MCF 10A (cell line): ENCODE measurements at regions of chr17 and their contacts with region 1.

Region 1: DNA sequence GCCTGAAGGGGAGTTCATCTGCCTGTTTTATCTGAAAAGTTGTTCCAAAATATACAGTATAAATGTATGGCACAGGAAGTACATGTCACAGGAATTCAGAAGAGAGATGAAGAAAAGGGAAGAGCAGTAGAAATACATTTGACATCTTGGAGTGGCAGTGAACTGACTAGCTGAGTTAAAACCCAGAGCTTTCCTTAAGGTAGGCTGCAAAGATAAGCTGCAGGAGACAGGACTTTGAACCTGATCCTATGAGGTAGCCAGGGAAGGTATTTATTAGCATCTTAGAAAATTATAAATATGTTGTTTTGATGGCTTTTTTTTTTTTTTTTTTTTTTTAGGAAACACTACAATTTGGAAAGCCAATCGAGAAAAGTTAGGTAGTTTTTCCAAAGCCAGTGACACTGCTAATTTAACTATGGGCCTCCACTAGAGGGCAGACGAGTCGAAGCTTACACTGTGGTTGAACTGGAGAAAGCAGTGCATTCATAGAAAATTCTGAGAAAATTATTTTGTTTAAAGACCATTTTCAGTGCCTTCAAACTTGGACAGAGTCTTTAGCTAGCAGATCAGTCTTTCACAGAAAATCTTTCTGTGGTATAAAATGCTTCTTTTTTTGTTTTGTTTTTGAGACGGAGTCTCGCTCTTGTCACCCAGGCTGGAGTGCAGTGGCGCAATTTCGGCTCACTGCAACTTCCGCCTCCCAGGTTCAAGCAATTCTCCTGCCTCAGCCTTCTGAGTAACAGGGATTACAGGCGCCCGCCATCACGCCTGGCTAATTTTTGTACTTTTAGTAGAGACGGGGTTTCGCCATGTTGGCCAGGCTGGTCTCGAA is 122.3 kb downstream of the SSH2 start:
- DNase-seq: peak; percentile 74
- H3K4me3 Mint-ChIP-seq: no peak overlapping the region
- H3K27ac Mint-ChIP-seq: no peak overlapping the region
- H3K4me1 Mint-ChIP-seq: no peaks in the 10 kb centered on the region
- H3K27me3 Mint-ChIP-seq: no peaks in the 10 kb centered on the region
- CTCF ChIP-seq: peak; percentile 74

Region 2: GRCh38 chr17:29825604-29826003 is 17.9 kb after region 1 on chr17:
- CTCF ChIA-PET with region 1: interaction called, 12 read pairs
- POLR2A ChIA-PET with region 1: interaction called, 4 read pairs
- intact Hi-C with region 1: no loop called
- DNase-seq: no peak
- H3K4me3 Mint-ChIP-seq: no peak overlapping the region
- H3K27ac Mint-ChIP-seq: no peak overlapping the region
- H3K4me1 Mint-ChIP-seq: no peaks in the 10 kb centered on the region
- H3K27me3 Mint-ChIP-seq: no peaks in the 10 kb centered on the region
- CTCF ChIP-seq: no peak

Region 3: DNA sequence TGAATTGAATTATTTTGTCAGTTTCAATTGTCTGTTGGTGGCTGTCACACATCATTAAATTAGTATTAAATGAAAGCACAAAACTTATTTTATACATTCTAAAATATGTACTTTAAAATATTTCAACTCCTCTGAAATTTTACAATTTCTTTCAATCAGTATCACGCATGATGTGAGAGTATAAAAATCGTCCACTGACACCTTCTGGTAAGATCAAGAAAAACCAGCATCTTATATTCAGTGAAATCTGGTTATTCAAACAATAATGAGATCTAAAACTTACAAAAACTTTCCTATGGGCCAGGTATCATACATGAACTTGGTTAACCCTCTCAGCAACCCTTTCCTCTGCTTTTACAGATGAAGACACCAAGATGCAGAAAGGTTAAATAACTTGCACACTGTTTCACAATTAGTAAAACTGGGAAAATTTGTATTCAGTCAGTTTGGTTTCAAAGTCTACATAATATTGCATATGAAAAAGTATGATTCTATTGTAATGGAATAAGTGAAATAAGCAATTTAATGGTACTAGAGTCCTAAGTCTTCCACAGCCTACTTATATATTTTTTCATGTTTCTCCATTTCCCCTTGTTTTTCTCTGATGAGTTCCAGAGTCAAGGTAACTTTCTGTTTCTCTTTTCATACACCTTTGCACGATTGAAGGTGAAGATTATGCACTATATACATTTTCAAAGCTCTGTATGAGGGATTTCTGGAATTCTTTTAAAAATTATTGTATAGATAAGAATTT is 192.4 kb after region 1 on chr17:
- CTCF ChIA-PET with region 1: interaction called, 7 read pairs
- POLR2A ChIA-PET with region 1: interaction called, 3 read pairs
- intact Hi-C with region 1: loop called (anchors 2 kb)
- DNase-seq: peak; percentile 18
- H3K4me3 Mint-ChIP-seq: no peak overlapping the region
- H3K27ac Mint-ChIP-seq: no peak overlapping the region
- H3K4me1 Mint-ChIP-seq: peaks cover 7% of the 10 kb centered on the region
- H3K27me3 Mint-ChIP-seq: no peaks in the 10 kb centered on the region
- CTCF ChIP-seq: no peak

Region 4: GRCh38 chr17:30021708-30022317 is 214.1 kb after region 1 on chr17:
- CTCF ChIA-PET with region 1: interaction called, 17 read pairs
- POLR2A ChIA-PET with region 1: interaction called, 3 read pairs
- intact Hi-C with region 1: loop called (anchors 1 kb)
- DNase-seq: peak; percentile 66
- H3K4me3 Mint-ChIP-seq: no peak overlapping the region
- H3K27ac Mint-ChIP-seq: no peak overlapping the region
- H3K4me1 Mint-ChIP-seq: no peaks in the 10 kb centered on the region
- H3K27me3 Mint-ChIP-seq: peaks cover 12% of the 10 kb centered on the region
- CTCF ChIP-seq: peak; percentile 73

Region 5: GRCh38 chr17:30503558-30503957 is 695.8 kb after region 1 on chr17:
- CTCF ChIA-PET with region 1: no interaction called
- POLR2A ChIA-PET with region 1: no interaction called
- intact Hi-C with region 1: no loop called
- DNase-seq: no peak
- H3K4me3 Mint-ChIP-seq: no peak overlapping the region
- H3K27ac Mint-ChIP-seq: no peak overlapping the region
- H3K4me1 Mint-ChIP-seq: no peaks in the 10 kb centered on the region
- H3K27me3 Mint-ChIP-seq: no peaks in the 10 kb centered on the region
- CTCF ChIP-seq: no peak